Activated B cell treated with CpG ODN at 0.5 μM for 24 hours (primary cell): ENCODE measurements at regions of chr17 and their contacts with region 1.

Region 1: GRCh38 chr17:35448214-35448898 is at the start of gene SLFN13:
- DNase-seq: peak; percentile 69
- ATAC-seq: peak; percentile 87
- H3K4me3 Mint-ChIP-seq: peak within 1 kb of the TSS; percentile 89
- H3K27ac Mint-ChIP-seq: peak within 1 kb of the TSS; percentile 84
- H3K4me1 Mint-ChIP-seq: peaks cover 23% of the 10 kb centered on the region
- H3K27me3 Mint-ChIP-seq: no peaks in the 10 kb centered on the region
- CTCF ChIP-seq: no peak
- total RNA-seq, gene SLFN13: 14.8 and 15.3 TPM in 2 replicates

Region 2: GRCh38 chr17:35368081-35368830 is 80.1 kb before region 1 on chr17:
- CTCF ChIA-PET with region 1: no interaction called
- POLR2A ChIA-PET with region 1: interaction called, 15 read pairs
- intact Hi-C with region 1: loop called (anchors 1 kb)
- DNase-seq: no peak
- ATAC-seq: peak; percentile 100
- H3K4me3 Mint-ChIP-seq: peak overlapping the region; percentile 39
- H3K27ac Mint-ChIP-seq: peak overlapping the region; percentile 78
- H3K4me1 Mint-ChIP-seq: peaks cover 60% of the 10 kb centered on the region
- H3K27me3 Mint-ChIP-seq: no peaks in the 10 kb centered on the region
- CTCF ChIP-seq: no peak

Region 3: GRCh38 chr17:35373534-35373983 is 74.8 kb before region 1 on chr17 and contains the start of gene SLFN11:
- CTCF ChIA-PET with region 1: no interaction called
- POLR2A ChIA-PET with region 1: interaction called, 15 read pairs
- intact Hi-C with region 1: loop called (anchors 1 kb)
- DNase-seq: peak; percentile 55
- ATAC-seq: peak; percentile 76
- H3K4me3 Mint-ChIP-seq: peak within 1 kb of the TSS; percentile 99
- H3K27ac Mint-ChIP-seq: peak within 1 kb of the TSS; percentile 98
- H3K4me1 Mint-ChIP-seq: peaks cover 50% of the 10 kb centered on the region
- H3K27me3 Mint-ChIP-seq: no peaks in the 10 kb centered on the region
- CTCF ChIP-seq: no peak
- total RNA-seq, gene SLFN11: 19.2 and 22.4 TPM in 2 replicates

Region 4: GRCh38 chr17:35432176-35433074 is 15.9 kb before region 1 on chr17 and contains the start of gene SLFN12:
- CTCF ChIA-PET with region 1: interaction called, 5 read pairs
- POLR2A ChIA-PET with region 1: interaction called, 18 read pairs
- intact Hi-C with region 1: loop called (anchors 1 kb)
- DNase-seq: peak; percentile 29
- ATAC-seq: peak; percentile 93
- H3K4me3 Mint-ChIP-seq: peak within 1 kb of the TSS; percentile 97
- H3K27ac Mint-ChIP-seq: peak within 1 kb of the TSS; percentile 92
- H3K4me1 Mint-ChIP-seq: peaks cover 31% of the 10 kb centered on the region
- H3K27me3 Mint-ChIP-seq: no peaks in the 10 kb centered on the region
- CTCF ChIP-seq: no peak
- total RNA-seq, gene SLFN12: 8.7 and 9.0 TPM in 2 replicates

Region 5: DNA sequence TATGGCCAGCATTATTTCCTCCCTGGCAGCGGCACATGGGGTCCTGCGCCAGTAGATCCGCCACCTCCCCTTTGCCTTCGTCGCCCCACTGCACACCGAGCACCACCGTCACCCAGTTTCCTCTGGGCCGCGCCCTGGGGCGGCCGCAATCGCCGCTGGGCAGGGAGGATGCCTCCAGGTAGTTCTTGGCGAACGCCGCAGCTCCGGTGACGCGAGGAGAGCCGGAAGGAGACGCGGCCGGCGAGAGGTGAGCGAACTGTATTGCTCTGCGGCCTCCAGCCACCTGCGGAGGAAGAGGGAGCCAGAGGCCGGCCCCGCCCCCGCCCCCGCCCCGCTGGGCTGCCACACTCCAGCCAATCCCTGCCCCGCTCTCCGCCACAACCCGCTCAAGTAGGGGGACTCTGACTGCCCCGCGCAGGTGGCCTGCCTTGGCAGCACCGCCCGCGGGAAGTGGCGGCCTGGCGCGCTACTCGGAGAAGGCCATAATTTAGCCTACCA is 12.0 kb after region 1 on chr17:
- CTCF ChIA-PET with region 1: interaction called, 6 read pairs
- POLR2A ChIA-PET with region 1: interaction called, 6 read pairs
- intact Hi-C with region 1: loop called (anchors 1 kb)
- DNase-seq: peak; percentile 62
- ATAC-seq: peak; percentile 94
- H3K4me3 Mint-ChIP-seq: peak overlapping the region; percentile 80
- H3K27ac Mint-ChIP-seq: peak overlapping the region; percentile 67
- H3K4me1 Mint-ChIP-seq: peaks cover 19% of the 10 kb centered on the region
- H3K27me3 Mint-ChIP-seq: peaks cover 3% of the 10 kb centered on the region
- CTCF ChIP-seq: no peak

Region 6: DNA sequence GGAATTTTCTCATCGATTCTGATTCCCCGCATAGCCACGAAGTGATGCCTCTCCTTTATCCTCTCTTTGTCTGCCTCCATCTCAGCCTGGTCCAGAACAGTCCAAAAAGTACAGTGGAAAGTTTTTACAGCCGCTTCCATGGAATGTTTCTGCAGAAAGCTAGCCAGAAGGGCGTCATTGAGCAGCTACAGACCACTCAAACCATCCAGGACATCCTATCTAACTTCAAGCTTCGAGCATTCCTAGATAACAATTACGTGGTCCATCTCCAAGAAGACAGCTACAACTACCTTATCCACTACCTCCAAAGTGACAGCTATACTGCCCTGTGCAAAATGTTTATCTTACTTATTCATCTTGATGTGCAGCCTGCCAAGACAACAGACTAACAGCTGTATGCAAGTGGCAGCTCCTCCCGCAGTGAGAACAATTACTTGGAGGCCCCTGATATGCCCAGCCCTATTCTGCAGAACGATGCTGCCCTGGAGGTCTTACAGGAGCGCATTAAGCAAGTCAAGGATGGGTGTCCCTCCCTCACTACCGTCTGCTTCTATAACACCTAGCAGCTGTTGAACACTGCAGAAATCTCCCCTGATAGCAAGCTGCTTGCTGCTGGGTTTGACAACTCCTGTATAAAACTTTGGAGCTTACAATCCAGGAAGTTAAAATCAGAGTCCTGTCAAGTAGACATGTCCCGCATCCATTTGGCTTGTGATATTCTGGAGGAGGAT is 50.3 kb after region 1 on chr17:
- CTCF ChIA-PET with region 1: no interaction called
- POLR2A ChIA-PET with region 1: interaction called, 6 read pairs
- intact Hi-C with region 1: loop called (anchors 2 kb)
- DNase-seq: no peak
- ATAC-seq: no peak
- H3K4me3 Mint-ChIP-seq: no peak overlapping the region
- H3K27ac Mint-ChIP-seq: no peak overlapping the region
- H3K4me1 Mint-ChIP-seq: peaks cover 17% of the 10 kb centered on the region
- H3K27me3 Mint-ChIP-seq: peaks cover 56% of the 10 kb centered on the region
- CTCF ChIP-seq: no peak